ENCODE measurements at regions of chr17 and their contacts with region 1.

Region 1: DNA sequence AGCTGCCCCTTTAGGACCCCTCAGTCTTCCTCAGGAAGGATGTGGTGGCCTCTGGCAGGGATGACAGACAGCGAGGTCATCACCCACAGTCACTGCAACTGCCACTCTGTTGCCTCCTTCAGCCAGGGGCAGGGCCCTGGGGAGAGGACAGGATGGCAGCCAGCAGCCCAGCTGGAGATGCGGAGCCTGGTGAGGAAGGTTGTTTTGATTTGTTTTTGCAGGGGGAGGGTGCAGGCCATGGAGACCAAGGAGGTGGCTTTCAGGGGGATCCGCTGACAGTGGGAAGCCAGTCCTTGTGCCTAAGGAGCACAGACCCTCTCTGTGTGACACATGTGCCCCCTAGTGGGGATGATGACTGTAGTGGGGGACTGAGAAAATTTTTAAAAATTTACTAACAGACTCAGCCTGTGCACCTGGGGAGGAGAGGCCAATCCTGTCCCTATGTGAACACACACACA is 7.4 kb downstream of the PRCD start:
- DNase-seq: peak; percentile 83
- H3K4me3 ChIP-seq: peak overlapping the region in 1 of 2 experiments; percentile 11; a peak in 2 of 4 replicates
- H3K27ac ChIP-seq: peak overlapping the region; percentile 57 to 99
- H3K4me1 ChIP-seq: peaks cover 25 to 56% of the 10 kb centered on the region in 2 experiments
- H3K27me3 ChIP-seq: peaks cover 9% of the 10 kb centered on the region; the same call in 1 of the 2 replicates
- CTCF ChIP-seq: peak; percentile 92
- EP300 ChIP-seq: peak in 1 of 2 experiments; percentile 7; a peak in 1 of 4 replicates
- RAD21 ChIP-seq: peak; percentile 99

Region 2: DNA sequence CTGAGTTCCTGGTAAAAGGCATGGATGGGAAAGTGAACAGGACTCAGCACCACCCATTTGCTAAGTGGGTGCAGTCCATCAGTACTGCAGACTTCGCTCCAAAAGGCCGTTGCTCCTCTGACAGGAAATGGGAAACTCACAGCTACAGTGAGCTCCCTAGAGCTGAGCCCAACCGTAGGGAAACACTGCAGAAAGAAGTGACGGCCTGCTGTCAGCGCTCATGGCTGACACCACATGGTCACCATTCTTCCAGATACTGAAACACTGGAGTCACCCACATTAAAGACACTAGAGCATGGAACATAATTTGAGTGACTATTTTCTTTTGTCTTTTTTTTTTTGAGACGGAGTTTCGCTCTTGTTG is 126.2 kb before region 1 on chr17:
- CTCF ChIA-PET with region 1: no interaction called
- POLR2A ChIA-PET with region 1: no interaction called
- DNase-seq: no peak
- H3K4me3 ChIP-seq: no peak overlapping the region
- H3K27ac ChIP-seq: no peak overlapping the region
- H3K4me1 ChIP-seq: peaks cover 0 to 35% of the 10 kb centered on the region in 2 experiments; a peak in 1 of 4 replicates
- H3K27me3 ChIP-seq: no peaks in the 10 kb centered on the region
- CTCF ChIP-seq: no peak
- EP300 ChIP-seq: no peak
- RAD21 ChIP-seq: no peak

Region 3: DNA sequence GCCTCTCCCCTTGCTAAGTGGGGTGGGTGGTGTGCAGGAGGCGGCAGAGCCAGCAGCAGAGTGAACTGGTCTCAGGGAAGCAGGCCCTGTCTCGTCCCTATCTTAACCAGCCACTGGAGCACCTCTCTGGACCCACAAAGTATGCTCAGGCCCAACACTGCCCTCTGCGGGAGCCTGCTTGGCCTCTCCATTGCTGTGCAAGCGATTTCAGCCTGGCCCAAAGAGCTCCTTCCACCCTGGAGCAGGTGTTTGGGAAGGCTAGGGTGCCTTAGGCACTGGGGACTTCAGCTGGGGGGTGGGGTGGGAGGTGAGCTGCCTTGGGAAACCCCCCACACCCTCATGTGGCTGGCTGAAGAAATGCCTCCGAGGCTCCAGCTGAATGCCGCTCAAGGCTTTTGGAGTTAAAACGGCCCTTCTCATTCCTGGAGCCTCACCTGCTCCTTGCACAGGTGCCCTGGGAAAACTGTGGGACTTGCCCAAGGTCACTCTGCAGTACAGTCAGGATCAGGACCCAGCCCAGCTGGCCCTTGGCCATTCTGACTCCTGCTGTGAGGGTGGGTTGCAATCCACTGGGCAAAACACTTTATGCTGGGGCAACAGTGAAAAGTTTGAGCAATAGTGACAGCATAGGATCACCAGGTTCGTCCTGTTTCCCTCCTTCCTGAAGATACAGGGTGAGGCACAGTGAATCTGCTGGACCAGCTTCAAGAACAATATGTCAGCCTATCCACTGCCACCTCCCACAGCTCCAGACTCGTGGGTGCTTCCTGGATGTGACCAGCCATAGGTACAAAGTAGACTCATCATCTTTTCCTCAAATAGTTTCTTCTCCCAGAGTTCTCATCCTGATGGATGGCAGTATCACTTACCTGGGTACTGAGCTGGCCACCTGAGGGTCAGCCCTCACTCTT is 88.4 kb before region 1 on chr17:
- CTCF ChIA-PET with region 1: interaction called, 28 read pairs
- POLR2A ChIA-PET with region 1: interaction called, 3 read pairs
- DNase-seq: peak; percentile 79
- H3K4me3 ChIP-seq: no peak overlapping the region
- H3K27ac ChIP-seq: no peak overlapping the region
- H3K4me1 ChIP-seq: no peaks in the 10 kb centered on the region; a peak in 1 of 4 replicates
- H3K27me3 ChIP-seq: no peaks in the 10 kb centered on the region
- CTCF ChIP-seq: peak; percentile 51
- EP300 ChIP-seq: no peak
- RAD21 ChIP-seq: peak; percentile 81

Region 4: GRCh38 chr17:76501018-76501826 is 46.0 kb before region 1 on chr17 and contains the start of gene RHBDF2:
- CTCF ChIA-PET with region 1: interaction called, 679 read pairs
- POLR2A ChIA-PET with region 1: interaction called, 6 read pairs
- DNase-seq: peak; percentile 97
- H3K4me3 ChIP-seq: peak within 1 kb of the TSS; percentile 65 to 78
- H3K27ac ChIP-seq: peak within 1 kb of the TSS in 1 of 2 experiments; percentile 30; a peak in 1 of 4 replicates
- H3K4me1 ChIP-seq: peaks cover 21 to 50% of the 10 kb centered on the region in 2 experiments; a peak in 3 of 4 replicates
- H3K27me3 ChIP-seq: no peaks in the 10 kb centered on the region
- CTCF ChIP-seq: no peak
- EP300 ChIP-seq: no peak
- RAD21 ChIP-seq: no peak
- polyA plus RNA-seq, gene RHBDF2: 14.0 and 16.1 TPM in 2 replicates

Region 5: GRCh38 chr17:76714822-76715495 is 167.7 kb after region 1 on chr17:
- CTCF ChIA-PET with region 1: interaction called, 3 read pairs
- POLR2A ChIA-PET with region 1: interaction called, 14 read pairs
- DNase-seq: peak; percentile 76
- H3K4me3 ChIP-seq: no peak overlapping the region
- H3K27ac ChIP-seq: peak overlapping the region in 1 of 2 experiments; percentile 97; a peak in 3 of 4 replicates
- H3K4me1 ChIP-seq: peaks cover 10 to 32% of the 10 kb centered on the region in 2 experiments
- H3K27me3 ChIP-seq: no peaks in the 10 kb centered on the region
- CTCF ChIP-seq: peak; percentile 100
- EP300 ChIP-seq: no peak
- RAD21 ChIP-seq: peak; percentile 81

Region 6: GRCh38 chr17:76791053-76791980 is 244.1 kb after region 1 on chr17:
- CTCF ChIA-PET with region 1: no interaction called
- POLR2A ChIA-PET with region 1: no interaction called
- DNase-seq: peak; percentile 62
- H3K4me3 ChIP-seq: peak overlapping the region; percentile 9 to 29; a peak in 3 of 4 replicates
- H3K27ac ChIP-seq: peak overlapping the region; percentile 63 to 67; a peak in 3 of 4 replicates
- H3K4me1 ChIP-seq: peaks cover 11 to 15% of the 10 kb centered on the region in 2 experiments
- H3K27me3 ChIP-seq: no peaks in the 10 kb centered on the region
- CTCF ChIP-seq: no peak
- EP300 ChIP-seq: no peak
- RAD21 ChIP-seq: no peak